OCI-LY7 (cell line): ENCODE measurements at regions of chr10 and their contacts with region 1.

Region 1: GRCh38 chr10:26881600-26882331 is 21.0 kb upstream of the ABI1 start:
- DNase-seq: peak; percentile 78
- H3K4me3 ChIP-seq: no peak overlapping the region
- H3K27ac ChIP-seq: no peak overlapping the region
- H3K4me1 ChIP-seq: peaks cover 5% of the 10 kb centered on the region
- CTCF ChIP-seq: peak; percentile 88

Region 2: DNA sequence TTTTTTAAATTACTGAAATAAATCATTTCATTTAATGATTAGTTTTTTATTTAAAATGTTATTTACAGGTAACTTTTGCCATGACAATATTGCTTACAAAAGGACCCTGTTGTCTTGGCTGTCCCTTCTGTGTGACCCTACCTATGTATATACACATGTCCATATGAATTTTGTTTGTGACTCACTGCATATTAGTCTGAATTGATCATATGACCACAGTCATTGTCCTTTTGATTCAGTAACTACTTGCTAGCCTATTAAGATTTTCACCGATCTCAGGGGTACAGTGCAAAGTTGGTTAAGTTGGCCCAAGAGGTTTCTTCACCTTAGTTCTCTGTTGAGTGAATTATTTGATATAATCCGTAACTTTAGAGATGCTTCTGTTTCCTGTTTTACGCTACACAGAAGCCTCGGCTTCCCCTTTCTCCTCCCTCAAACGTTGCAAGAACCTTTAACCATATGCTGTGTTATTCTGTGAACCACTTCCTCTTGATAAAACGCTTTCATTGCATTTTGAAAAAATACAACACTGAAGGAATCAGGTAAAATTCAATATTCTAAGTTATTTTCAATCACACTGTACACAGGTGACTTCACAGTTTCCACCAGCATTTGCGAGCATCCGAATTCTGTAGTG is 399.7 kb before region 1 on chr10:
- CTCF ChIA-PET with region 1: no interaction called
- POLR2A ChIA-PET with region 1: no interaction called
- intact Hi-C with region 1: no loop called
- DNase-seq: peak; percentile 86
- H3K4me3 ChIP-seq: peak overlapping the region; percentile 58
- H3K27ac ChIP-seq: peak overlapping the region; percentile 96
- H3K4me1 ChIP-seq: peaks cover 85% of the 10 kb centered on the region
- CTCF ChIP-seq: no peak

Region 3: DNA sequence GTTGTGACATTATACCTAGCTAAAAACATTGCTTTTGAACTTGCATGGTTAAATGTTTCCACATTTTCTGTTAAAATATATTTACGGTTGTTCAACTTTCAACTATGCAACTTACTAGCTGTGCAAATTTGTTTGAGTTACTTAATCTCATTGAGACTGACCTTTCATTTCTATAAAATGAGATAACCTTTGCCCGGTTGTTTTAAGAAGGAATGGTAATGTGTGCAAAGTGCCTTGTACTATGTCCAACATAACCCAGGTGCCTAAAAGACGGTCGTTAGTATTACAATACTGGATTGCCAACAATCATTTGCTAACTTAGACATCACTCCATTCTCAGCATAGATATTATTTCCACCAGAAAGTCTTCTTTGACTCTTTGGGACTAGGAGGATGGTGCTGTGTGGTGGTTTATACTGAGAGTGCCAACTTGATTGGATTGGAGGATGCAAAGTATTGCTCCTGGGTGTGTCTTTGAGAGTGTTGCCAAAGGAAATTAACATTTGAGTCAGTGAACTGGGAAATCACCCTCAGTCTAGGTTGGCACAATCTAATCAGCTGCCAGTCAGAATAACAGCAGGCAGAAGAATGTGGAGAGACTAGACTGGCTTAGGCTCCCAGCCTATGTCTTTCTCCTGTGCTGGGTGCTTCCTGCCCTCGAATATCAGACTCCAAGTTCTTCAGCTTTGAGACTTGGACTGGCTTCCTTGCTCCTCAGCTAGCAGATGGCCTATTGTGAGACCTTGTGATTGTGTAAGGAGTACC is 269.4 kb before region 1 on chr10:
- CTCF ChIA-PET with region 1: no interaction called
- POLR2A ChIA-PET with region 1: no interaction called
- intact Hi-C with region 1: loop called (anchors 5 kb)
- DNase-seq: no peak
- H3K4me3 ChIP-seq: no peak overlapping the region
- H3K27ac ChIP-seq: no peak overlapping the region
- H3K4me1 ChIP-seq: no peaks in the 10 kb centered on the region
- CTCF ChIP-seq: no peak

Region 4: GRCh38 chr10:26682931-26683330 is 198.8 kb before region 1 on chr10:
- CTCF ChIA-PET with region 1: no interaction called
- POLR2A ChIA-PET with region 1: interaction called, 3 read pairs
- intact Hi-C with region 1: loop called (anchors 5 kb)
- DNase-seq: peak; percentile 25
- H3K4me3 ChIP-seq: no peak overlapping the region
- H3K27ac ChIP-seq: no peak overlapping the region
- H3K4me1 ChIP-seq: peaks cover 13% of the 10 kb centered on the region
- CTCF ChIP-seq: no peak

Region 5: DNA sequence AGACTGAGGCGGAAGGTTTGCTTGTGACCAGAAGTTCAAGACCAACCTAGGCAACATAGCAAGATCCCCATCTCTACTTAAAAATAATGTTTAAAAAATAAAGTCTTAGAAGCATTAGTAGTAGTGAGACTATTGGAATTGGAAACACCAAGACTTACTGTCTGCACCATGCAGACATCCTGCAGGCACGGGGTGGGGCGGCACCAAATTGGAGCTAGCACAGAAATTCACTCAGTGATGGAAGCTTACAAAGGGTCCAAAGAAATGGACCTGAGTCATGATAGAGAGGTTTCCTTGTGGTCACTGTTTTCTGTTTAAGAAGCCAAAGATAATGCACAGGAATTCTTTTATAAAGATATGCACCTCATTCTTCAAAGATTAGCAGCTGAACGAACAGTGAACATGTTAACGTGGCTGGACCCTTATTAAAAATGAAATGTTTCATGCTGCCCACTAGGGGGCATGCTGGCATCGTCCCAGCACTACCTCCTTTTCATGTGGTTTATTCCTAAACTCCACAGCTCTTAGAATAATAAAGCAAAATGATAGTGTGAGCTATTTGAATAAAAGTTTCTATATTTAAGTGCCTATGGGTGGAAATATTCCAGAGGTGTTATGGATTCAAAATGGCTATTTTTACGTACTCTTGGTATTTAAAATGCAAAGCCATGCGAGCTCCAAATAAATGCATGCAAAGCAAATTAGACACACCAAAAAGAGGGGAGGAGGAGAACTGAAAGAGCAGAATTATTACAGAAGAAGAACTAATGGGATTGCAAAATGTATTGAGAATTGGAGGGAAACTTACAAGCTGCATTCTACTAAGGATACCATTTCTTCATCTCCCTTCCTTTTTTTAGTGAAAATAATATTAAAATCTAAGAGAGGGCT is 155.7 kb before region 1 on chr10:
- CTCF ChIA-PET with region 1: interaction called, 10 read pairs
- POLR2A ChIA-PET with region 1: interaction called, 9 read pairs
- intact Hi-C with region 1: loop called (anchors 1 kb)
- DNase-seq: peak; percentile 73
- H3K4me3 ChIP-seq: no peak overlapping the region
- H3K27ac ChIP-seq: no peak overlapping the region
- H3K4me1 ChIP-seq: peaks cover 3% of the 10 kb centered on the region
- CTCF ChIP-seq: peak; percentile 99

Region 6: DNA sequence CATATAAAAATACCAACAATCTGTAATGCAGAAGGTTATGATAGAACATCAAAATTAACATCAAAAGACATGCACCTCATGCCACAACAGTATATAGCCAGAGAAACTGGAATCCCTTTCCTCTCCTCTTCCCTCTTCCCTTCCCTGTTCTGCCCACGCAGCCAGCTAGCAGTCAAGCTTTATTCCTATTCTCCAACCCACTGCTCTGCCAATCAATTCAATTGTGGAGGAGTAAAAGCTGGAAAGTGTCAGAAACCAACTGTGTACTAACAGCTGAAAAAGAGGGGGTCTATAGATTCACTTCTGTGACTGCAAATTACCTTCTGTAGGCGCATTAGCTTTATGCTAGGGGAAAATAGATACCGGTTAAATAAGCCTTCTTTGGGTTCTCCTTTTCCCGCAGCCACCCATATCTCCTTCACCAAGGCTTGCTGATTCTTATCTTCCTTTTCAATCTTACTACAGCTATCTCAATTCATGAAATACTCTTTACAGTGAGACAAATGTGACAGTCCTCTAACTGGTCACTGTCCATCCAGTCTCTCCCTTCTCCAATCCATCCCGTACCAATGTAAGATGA is 37.3 kb before region 1 on chr10:
- CTCF ChIA-PET with region 1: no interaction called
- POLR2A ChIA-PET with region 1: no interaction called
- intact Hi-C with region 1: no loop called
- DNase-seq: no peak
- H3K4me3 ChIP-seq: no peak overlapping the region
- H3K27ac ChIP-seq: no peak overlapping the region
- H3K4me1 ChIP-seq: peaks cover 40% of the 10 kb centered on the region
- CTCF ChIP-seq: no peak